ENCODE measurements at regions of chr14 and their contacts with region 1.

Region 1: GRCh38 chr14:105267820-105268548 is 19.7 kb downstream of the BTBD6 start:
- DNase-seq: no peak
- ATAC-seq: no peak
- H3K4me3 ChIP-seq: no peak overlapping the region
- H3K4me3 Mint-ChIP-seq: no peak overlapping the region
- H3K27ac ChIP-seq: no peak overlapping the region
- H3K27ac Mint-ChIP-seq: no peak overlapping the region
- H3K4me1 ChIP-seq: no peaks in the 10 kb centered on the region
- H3K4me1 Mint-ChIP-seq: no peaks in the 10 kb centered on the region
- H3K27me3 ChIP-seq: no peaks in the 10 kb centered on the region
- H3K27me3 Mint-ChIP-seq: no peaks in the 10 kb centered on the region
- CTCF ChIP-seq: no peak

Region 2: DNA sequence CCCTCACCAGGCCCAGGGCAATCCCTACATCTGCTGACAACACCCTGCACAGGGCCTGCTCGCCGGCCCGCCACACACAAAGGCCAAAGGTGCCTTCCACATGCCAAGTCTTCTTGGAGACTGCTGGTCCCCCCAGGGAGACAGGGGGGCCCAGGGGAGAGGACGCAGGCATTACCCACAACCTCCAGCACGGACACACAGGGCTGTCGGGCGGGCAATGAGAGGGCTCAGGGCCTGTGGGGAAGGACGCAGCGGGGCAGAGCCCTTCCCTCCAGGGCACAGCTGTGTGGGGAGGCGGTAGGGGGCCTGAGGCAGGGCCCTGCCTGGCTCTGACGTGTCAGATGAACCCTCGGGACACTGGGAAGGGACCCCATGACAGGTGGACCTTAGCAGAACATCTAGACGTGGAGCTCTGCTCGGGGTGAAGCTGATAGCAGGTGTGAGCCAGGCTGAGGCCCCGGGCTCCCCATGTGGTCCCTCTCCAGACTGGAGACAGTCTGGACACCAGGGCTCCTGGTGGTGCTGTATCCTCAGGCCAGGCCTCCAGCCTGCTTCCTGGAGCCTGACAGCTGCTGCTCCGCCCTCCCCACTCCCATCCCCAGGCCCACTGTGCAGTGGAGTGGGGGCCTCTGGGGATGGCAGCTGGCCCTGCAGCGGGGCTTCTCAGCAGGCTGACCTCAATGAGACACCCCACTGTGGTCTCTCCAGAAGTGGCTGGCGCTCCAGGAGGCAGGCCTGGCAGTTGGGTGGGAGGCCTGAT is 55.3 kb before region 1 on chr14:
- CTCF ChIA-PET with region 1: no interaction called
- POLR2A ChIA-PET with region 1: no interaction called
- intact Hi-C with region 1: loop called in 1 of 2 experiments (anchors 10 kb)
- DNase-seq: no peak
- ATAC-seq: no peak
- H3K4me3 ChIP-seq: no peak overlapping the region
- H3K4me3 Mint-ChIP-seq: no peak overlapping the region
- H3K27ac ChIP-seq: no peak overlapping the region
- H3K27ac Mint-ChIP-seq: no peak overlapping the region
- H3K4me1 ChIP-seq: no peaks in the 10 kb centered on the region
- H3K4me1 Mint-ChIP-seq: no peaks in the 10 kb centered on the region
- H3K27me3 ChIP-seq: no peaks in the 10 kb centered on the region
- H3K27me3 Mint-ChIP-seq: no peaks in the 10 kb centered on the region
- CTCF ChIP-seq: no peak

Measured in CD4-positive, alpha-beta T cell (primary cell).